ENCODE measurements at regions of chrX and their contacts with region 1.

Region 1: DNA sequence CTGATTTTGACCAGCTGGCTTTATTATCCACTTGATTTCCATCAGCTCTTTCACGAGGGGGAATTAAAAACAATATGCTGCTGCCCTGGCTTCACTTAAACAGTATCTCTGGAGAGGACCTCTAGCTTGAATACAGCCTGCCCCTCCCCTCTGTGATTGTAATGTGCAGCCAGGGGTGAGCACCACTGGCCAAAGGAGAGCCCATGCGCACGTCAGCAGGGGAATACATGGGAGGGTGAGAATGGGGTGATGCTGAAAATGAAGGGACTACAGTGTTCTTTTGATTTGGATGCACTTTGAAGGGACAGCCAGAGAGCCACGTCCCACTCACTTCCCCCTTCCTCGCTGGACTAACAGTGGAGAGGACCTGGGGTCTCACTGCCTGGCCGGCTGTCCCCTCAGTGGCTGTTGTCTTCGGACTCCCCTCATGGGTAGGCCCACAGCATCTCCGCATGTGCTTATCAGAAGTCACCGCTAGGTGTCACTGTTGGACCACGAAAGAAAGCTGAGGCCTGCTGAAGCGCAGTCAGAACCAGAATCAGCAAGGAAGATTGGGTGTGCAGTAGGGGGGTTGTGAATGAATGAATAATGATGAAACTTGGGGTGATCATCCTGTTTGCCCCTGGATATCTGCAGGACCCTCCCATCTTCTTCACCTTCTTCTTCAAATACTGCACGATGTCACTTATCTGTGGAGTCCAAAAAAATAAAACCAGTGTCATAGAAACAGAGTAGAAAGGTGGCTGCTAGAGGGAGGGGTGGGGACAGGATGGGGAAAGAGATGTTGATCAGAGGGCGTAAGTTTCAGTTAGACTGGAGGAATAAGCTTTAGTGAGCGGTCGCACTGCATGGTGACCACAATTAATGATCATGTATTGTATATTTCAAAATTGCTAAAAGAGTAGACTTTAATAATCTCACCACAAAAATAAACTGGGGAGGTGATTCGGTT is 32.8 kb downstream of the CLCN4 start:
- DNase-seq: peak; percentile 90
- H3K4me3 ChIP-seq: no peak overlapping the region
- H3K27ac ChIP-seq: peak overlapping the region in 3 of 8 donors; percentile 15 to 18 (median 17)
- H3K4me1 ChIP-seq: peaks cover 0 to 12% (median 5%) of the 10 kb centered on the region in 6 donors
- H3K27me3 ChIP-seq: no peaks in the 10 kb centered on the region
- CTCF ChIP-seq: peak; percentile 59 to 91 (median 84)
- POLR2A ChIP-seq: no peak

Region 2: GRCh38 chrX:10722851-10723250 is 533.3 kb after region 1 on chrX:
- intact Hi-C with region 1: loop called (anchors 5 kb)
- DNase-seq: no peak
- H3K4me3 ChIP-seq: no peak overlapping the region
- H3K27ac ChIP-seq: no peak overlapping the region
- H3K4me1 ChIP-seq: no peaks in the 10 kb centered on the region
- H3K27me3 ChIP-seq: no peaks in the 10 kb centered on the region
- CTCF ChIP-seq: peak; percentile 27 to 72 (median 63)
- POLR2A ChIP-seq: no peak

Region 3: DNA sequence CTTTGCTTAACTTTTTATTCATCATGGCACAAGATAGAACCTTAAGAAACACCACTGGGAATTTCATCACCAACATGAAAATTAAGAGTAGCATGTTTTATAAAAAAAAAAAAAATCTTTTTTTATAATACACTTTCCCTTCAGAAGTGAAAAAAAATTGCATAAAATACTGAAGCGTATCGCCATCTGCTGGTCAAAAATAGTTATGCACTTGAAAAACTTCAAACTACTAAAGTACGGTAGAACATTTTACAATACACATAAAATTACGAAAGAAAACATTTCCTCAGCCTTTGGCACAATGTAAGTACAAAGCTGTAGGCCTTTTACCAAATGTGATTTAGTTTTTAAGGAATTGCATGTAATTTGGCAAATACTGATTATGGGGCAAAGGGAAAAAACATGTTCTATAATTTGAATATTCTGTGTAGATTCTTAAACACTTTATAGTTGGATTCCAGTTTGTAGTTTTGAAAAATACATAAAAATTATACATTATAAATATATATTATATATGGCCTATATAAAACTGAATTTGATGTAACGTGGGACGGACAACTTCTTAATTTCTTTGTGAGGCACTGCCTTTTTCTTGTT is 948.0 kb after region 1 on chrX:
- intact Hi-C with region 1: loop called (anchors 5 kb)
- DNase-seq: no peak
- H3K4me3 ChIP-seq: no peak overlapping the region
- H3K27ac ChIP-seq: no peak overlapping the region
- H3K4me1 ChIP-seq: peaks cover 0 to 7% (median 0%) of the 10 kb centered on the region in 6 donors
- H3K27me3 ChIP-seq: peaks cover 0 to 13% (median 9%) of the 10 kb centered on the region in 7 donors
- CTCF ChIP-seq: peak; percentile 22 to 75 (median 61)
- POLR2A ChIP-seq: no peak

Measured in spleen (tissue), 13 donors.